H1 (cell line): ENCODE measurements at regions of chr10 and their contacts with region 1.

Region 1: DNA sequence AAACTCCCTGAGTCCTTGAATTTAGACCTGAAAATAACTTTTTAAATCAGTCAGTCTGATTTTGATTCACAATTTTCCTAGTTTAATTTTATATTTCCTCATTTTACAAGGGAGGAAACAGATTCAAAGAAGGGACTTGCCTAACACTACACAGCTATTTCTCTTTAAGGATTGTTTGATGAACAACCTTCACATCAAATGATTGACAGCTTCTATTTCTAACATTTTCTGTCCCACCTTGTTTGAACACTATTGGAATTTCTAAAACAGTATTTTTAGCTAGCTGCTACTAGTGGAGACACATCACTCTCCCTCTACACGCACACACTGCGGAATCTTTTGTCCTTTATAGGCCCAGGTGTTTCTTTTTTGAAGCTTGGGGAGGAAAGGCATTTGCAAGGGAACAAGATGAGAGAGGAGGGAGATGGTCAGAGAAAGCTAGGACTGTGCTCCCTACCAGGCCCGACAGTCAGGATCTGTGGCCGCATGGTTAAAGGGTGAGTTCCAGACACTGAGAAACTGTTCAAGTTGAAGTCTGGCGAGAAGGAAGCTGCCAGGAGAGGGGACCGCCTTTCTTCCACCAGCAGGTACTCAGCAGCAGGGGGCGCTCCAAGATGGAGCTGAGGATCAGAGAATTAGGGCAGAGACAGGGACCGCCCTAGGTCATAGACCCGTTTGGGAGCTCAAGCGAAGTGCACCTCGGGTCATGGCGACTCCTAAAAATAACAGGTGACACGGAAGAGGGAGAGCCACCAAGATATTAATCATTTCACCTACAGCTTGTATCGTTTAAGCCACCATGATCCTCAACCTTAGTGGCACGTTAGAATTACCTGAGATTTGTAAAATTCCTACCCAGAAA is 49.7 kb downstream of the DNAJC12 start:
- DNase-seq: peak; percentile 56 to 94
- H3K4me3 ChIP-seq: no peak overlapping the region
- H3K27ac ChIP-seq: no peak overlapping the region
- H3K4me1 ChIP-seq: peaks cover 0 to 6% (median 2%) of the 10 kb centered on the region in 4 experiments; a peak in 5 of 7 replicates
- H3K27me3 ChIP-seq: no peaks in the 10 kb centered on the region
- CTCF ChIP-seq: peak; percentile 85 to 91 (median 86)
- EP300 ChIP-seq: no peak
- POLR2A ChIP-seq: no peak
- RAD21 ChIP-seq: peak; percentile 87 to 88

Region 2: DNA sequence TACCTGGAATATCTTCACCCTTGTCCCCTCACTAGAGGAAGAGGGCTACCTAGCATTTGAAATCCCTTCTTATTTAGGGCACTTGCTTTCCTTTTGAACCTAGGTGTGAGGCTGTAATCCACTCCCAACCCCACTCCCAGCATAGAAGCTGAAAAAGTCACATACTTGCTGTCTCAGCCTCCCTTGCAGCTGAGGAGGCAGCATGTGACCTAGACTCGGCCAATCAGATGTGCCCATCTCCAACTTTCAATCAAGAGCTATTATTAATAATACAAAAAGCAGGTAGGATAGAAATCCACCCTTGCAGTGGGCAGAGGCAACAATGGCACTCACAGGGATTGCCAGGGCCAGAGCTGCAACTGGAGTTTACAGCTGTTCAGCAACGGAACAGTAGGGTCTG is 21.0 kb before region 1 on chr10:
- CTCF ChIA-PET with region 1: interaction called, 10 read pairs
- POLR2A ChIA-PET with region 1: interaction called, 3 read pairs
- DNase-seq: no peak
- H3K4me3 ChIP-seq: no peak overlapping the region
- H3K27ac ChIP-seq: no peak overlapping the region
- H3K4me1 ChIP-seq: peaks cover 0 to 2% (median 2%) of the 10 kb centered on the region in 4 experiments; a peak in 1 of 7 replicates
- H3K27me3 ChIP-seq: no peaks in the 10 kb centered on the region; a peak in 1 of 7 replicates
- CTCF ChIP-seq: no peak
- EP300 ChIP-seq: no peak
- POLR2A ChIP-seq: no peak
- RAD21 ChIP-seq: no peak

Region 3: DNA sequence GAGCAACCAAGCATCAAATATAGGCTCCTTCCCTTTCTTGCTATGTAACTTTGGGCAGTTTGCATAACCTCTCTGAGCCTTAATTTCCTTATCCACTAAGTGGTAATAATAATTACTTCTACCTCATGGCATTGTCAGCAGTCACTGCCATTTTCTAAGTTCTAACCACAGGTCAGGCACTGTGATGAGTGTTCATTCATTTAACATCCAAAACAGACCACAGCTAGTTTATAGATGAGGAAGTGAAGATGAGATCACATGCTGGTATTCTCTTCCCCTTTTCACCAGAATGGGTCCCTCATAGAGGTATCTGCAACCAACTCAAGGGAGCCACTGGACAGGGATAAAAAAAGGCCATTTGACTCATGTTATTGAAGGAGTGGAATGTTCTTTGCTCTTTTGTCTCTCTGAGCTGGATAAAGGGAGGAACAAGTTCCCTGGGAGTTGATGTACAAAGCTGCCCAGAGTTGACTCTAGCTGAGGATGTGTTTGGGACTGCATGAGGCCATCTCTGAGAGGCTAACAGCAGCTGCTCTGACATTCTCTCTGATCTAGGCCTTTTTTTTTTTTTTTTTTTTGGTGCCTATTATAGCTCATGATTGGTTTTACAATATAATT is 15.3 kb before region 1 on chr10:
- CTCF ChIA-PET with region 1: interaction called, 43 read pairs
- POLR2A ChIA-PET with region 1: no interaction called
- DNase-seq: no peak
- H3K4me3 ChIP-seq: no peak overlapping the region
- H3K27ac ChIP-seq: no peak overlapping the region
- H3K4me1 ChIP-seq: no peaks in the 10 kb centered on the region
- H3K27me3 ChIP-seq: no peaks in the 10 kb centered on the region
- CTCF ChIP-seq: no peak
- EP300 ChIP-seq: no peak
- POLR2A ChIP-seq: no peak
- RAD21 ChIP-seq: no peak

Region 4: GRCh38 chr10:67803588-67804394 is 15.5 kb after region 1 on chr10:
- CTCF ChIA-PET with region 1: interaction called, 15 read pairs
- POLR2A ChIA-PET with region 1: interaction called, 3 read pairs
- DNase-seq: no peak
- H3K4me3 ChIP-seq: no peak overlapping the region
- H3K27ac ChIP-seq: no peak overlapping the region
- H3K4me1 ChIP-seq: peaks cover 0 to 6% (median 4%) of the 10 kb centered on the region in 4 experiments; a peak in 4 of 7 replicates
- H3K27me3 ChIP-seq: no peaks in the 10 kb centered on the region
- CTCF ChIP-seq: no peak
- EP300 ChIP-seq: no peak
- POLR2A ChIP-seq: no peak
- RAD21 ChIP-seq: no peak

Region 5: GRCh38 chr10:68156373-68157185 is 368.3 kb after region 1 on chr10:
- CTCF ChIA-PET with region 1: interaction called, 12 read pairs
- POLR2A ChIA-PET with region 1: no interaction called
- DNase-seq: no peak
- H3K4me3 ChIP-seq: no peak overlapping the region
- H3K27ac ChIP-seq: no peak overlapping the region
- H3K4me1 ChIP-seq: peaks cover 0 to 12% (median 9%) of the 10 kb centered on the region in 4 experiments; a peak in 5 of 7 replicates
- H3K27me3 ChIP-seq: no peaks in the 10 kb centered on the region
- CTCF ChIP-seq: peak in 2 of 3 experiments; percentile 57 to 77; a peak in 3 of 4 replicates
- EP300 ChIP-seq: no peak
- POLR2A ChIP-seq: no peak
- RAD21 ChIP-seq: peak; percentile 80 to 83